ENCODE measurements at regions of chr3 and their contacts with region 1.

Region 1: DNA sequence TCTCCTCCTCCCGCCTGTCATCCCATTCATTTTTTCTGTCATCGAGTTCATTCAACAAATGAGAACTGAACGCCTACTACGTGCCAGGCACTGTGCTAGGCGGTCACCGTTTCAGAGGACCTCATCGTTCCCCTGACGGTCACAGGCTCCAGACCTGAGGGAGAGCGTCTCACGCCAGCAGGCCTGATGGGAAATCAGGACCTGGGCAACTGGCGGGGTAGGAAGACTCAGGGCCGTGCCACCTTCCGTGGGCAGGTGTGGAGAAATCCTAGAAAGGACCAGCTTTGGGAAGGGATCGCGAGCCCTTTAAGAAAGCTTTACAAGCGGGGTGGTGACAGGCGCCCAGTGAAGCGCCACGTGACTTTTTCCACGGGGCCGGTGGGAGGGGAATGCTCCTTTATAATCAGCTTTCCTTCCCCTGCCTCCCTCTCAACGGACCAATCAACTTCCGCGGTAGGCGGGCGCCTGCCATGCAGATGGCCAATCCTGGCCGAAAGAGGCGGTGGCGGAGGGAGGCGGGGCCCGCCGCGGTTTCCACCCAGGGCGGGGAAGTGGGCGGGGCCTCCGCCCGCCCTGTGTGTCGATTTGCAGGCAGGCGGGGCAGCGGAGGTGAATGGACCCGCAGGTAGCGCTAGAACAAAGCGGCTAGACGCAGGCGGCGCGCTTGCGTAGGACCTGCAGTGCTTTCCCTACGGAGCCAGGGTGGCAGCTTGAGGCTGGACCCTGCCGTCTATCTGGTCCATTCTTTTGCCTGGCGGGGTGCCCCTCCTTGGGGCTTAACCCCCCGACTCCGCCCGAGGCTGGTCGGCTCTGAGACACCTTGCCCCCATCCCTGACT is 816 bp upstream of the DUSP7 start:
- DNase-seq: peak; percentile 92
- ATAC-seq: peak; percentile 85
- H3K4me3 Mint-ChIP-seq: peak overlapping the region; percentile 88
- H3K27ac Mint-ChIP-seq: peak overlapping the region; percentile 88
- H3K4me1 Mint-ChIP-seq: peaks cover 49% of the 10 kb centered on the region
- H3K27me3 Mint-ChIP-seq: no peaks in the 10 kb centered on the region
- CTCF ChIP-seq: no peak

Region 2: GRCh38 chr3:50358911-50359759 is 1698.1 kb before region 1 on chr3 and contains the start of gene TMEM115:
- CTCF ChIA-PET with region 1: no interaction called
- POLR2A ChIA-PET with region 1: no interaction called
- intact Hi-C with region 1: loop called (anchors 10 kb)
- DNase-seq: peak; percentile 88
- ATAC-seq: peak; percentile 100
- H3K4me3 Mint-ChIP-seq: peak within 1 kb of the TSS; percentile 96
- H3K27ac Mint-ChIP-seq: peak within 1 kb of the TSS; percentile 89
- H3K4me1 Mint-ChIP-seq: peaks cover 49% of the 10 kb centered on the region
- H3K27me3 Mint-ChIP-seq: no peaks in the 10 kb centered on the region
- CTCF ChIP-seq: no peak
- total RNA-seq, gene TMEM115: 18.7 and 19.6 TPM in 2 replicates

Region 3: GRCh38 chr3:51891242-51892039 is 165.7 kb before region 1 on chr3:
- CTCF ChIA-PET with region 1: no interaction called
- POLR2A ChIA-PET with region 1: no interaction called
- intact Hi-C with region 1: no loop called
- DNase-seq: no peak
- ATAC-seq: no peak
- H3K4me3 Mint-ChIP-seq: no peak overlapping the region
- H3K27ac Mint-ChIP-seq: no peak overlapping the region
- H3K4me1 Mint-ChIP-seq: no peaks in the 10 kb centered on the region
- H3K27me3 Mint-ChIP-seq: peaks cover 30% of the 10 kb centered on the region
- CTCF ChIP-seq: no peak

Region 4: DNA sequence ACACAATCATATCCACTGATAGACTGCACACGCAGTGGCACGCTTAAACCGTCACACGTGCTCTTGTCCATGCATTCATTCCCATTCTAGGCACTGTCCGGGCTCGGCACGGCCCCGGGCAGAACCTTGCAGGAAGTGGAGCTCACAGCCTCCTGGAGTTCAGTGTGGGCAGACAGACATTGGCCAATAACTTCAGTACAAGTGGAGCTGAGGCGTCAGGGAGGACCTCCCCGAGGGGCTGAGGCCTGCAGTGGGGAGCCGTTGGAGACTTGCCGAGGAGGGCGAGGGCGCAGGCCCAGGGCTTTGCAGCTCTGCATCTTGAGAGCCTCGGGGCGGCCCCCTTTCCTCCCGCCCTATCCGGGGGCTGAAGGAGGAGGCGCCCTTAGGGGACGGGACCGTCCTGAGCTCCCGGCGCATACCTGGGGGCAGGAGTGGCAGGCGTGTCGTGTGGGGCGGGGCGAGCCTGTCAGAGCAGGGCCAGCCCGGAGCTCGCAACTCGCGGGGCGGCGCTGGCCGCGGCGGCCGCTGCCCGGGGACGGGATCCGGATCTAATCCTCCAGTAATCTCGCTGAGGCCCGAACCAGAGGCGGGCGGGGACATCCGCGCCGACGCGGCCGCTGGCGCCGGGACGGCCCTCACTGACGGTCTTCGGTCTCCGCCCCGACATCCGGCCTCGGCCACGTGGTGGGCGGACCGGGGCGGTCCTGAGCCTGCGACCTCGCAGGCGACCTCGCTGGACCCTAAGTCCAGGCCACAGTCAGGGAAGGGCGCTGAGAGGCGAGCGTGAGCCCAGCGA is 74.2 kb before region 1 on chr3 and contains the start of gene ACY1:
- CTCF ChIA-PET with region 1: no interaction called
- POLR2A ChIA-PET with region 1: interaction called, 18 read pairs
- intact Hi-C with region 1: loop called (anchors 2 kb)
- DNase-seq: peak; percentile 70
- ATAC-seq: peak; percentile 79
- H3K4me3 Mint-ChIP-seq: peak within 1 kb of the TSS; percentile 86
- H3K27ac Mint-ChIP-seq: peak within 1 kb of the TSS; percentile 91
- H3K4me1 Mint-ChIP-seq: peaks cover 23% of the 10 kb centered on the region
- H3K27me3 Mint-ChIP-seq: no peaks in the 10 kb centered on the region
- CTCF ChIP-seq: no peak
- total RNA-seq, gene ACY1: 24.9 and 26.7 TPM in 2 replicates

Region 5: GRCh38 chr3:52123106-52123725 is 66.0 kb after region 1 on chr3:
- CTCF ChIA-PET with region 1: interaction called, 18 read pairs
- POLR2A ChIA-PET with region 1: interaction called, 9 read pairs
- intact Hi-C with region 1: loop called (anchors 1 kb)
- DNase-seq: peak; percentile 60
- ATAC-seq: peak; percentile 74
- H3K4me3 Mint-ChIP-seq: no peak overlapping the region
- H3K27ac Mint-ChIP-seq: peak overlapping the region; percentile 82
- H3K4me1 Mint-ChIP-seq: peaks cover 34% of the 10 kb centered on the region
- H3K27me3 Mint-ChIP-seq: no peaks in the 10 kb centered on the region
- CTCF ChIP-seq: no peak

Region 6: GRCh38 chr3:52197842-52198668 is 140.9 kb after region 1 on chr3 and contains the start of gene ALAS1:
- CTCF ChIA-PET with region 1: no interaction called
- POLR2A ChIA-PET with region 1: interaction called, 4 read pairs
- intact Hi-C with region 1: loop called (anchors 2 kb)
- DNase-seq: peak; percentile 98
- ATAC-seq: peak; percentile 96
- H3K4me3 Mint-ChIP-seq: peak within 1 kb of the TSS; percentile 97
- H3K27ac Mint-ChIP-seq: peak within 1 kb of the TSS; percentile 87
- H3K4me1 Mint-ChIP-seq: peaks cover 38% of the 10 kb centered on the region
- H3K27me3 Mint-ChIP-seq: no peaks in the 10 kb centered on the region
- CTCF ChIP-seq: no peak
- total RNA-seq, gene ALAS1: 25.9 and 27.6 TPM in 2 replicates

Region 7: DNA sequence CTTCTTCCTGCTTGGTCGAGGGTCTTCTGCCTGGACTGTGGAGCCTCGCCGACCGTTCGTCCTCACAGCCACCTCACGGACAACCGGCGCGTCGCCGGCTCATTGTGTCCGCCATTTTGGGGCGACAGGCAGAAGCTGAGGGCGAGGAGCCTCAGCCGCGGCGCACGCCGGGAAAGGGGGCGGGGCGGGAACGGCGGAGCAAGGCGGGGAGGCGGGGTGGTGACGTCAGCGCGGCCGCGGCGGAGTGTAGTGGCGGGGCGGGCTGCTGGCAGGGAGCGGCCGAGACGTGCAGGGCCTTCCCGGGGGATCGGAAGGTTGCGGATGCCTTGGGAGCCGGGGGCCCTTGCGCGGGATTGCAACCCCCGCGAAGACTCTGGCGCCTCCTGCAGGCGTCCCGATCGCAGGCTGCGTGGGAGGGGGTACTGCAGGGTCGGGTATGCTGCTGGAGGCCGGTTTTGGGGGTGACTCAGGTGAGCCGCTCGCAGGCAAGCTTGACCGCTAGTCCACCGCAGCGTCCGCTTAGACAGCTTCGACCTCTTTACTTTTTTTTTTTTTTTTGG is 221.4 kb after region 1 on chr3 and contains the start of gene WDR82:
- CTCF ChIA-PET with region 1: interaction called, 4 read pairs
- POLR2A ChIA-PET with region 1: no interaction called
- intact Hi-C with region 1: loop called (anchors 1 kb)
- DNase-seq: peak; percentile 100
- ATAC-seq: peak; percentile 85
- H3K4me3 Mint-ChIP-seq: peak within 1 kb of the TSS; percentile 99
- H3K27ac Mint-ChIP-seq: peak within 1 kb of the TSS; percentile 98
- H3K4me1 Mint-ChIP-seq: peaks cover 55% of the 10 kb centered on the region
- H3K27me3 Mint-ChIP-seq: no peaks in the 10 kb centered on the region
- CTCF ChIP-seq: no peak
- total RNA-seq, gene WDR82: 84.1 and 86.4 TPM in 2 replicates